ENCODE measurements at regions of chr20 and their contacts with region 1.

Region 1: GRCh38 chr20:9160757-9161156 is 91.9 kb downstream of the PLCB4 start:
- DNase-seq: no peak
- ATAC-seq: peak; percentile 25 to 75 (median 66)
- H3K4me3 ChIP-seq: peak overlapping the region in 3 of 10 donors; percentile 1 to 20 (median 16)
- H3K27ac ChIP-seq: peak overlapping the region in 7 of 10 donors; percentile 13 to 72 (median 56)
- H3K4me1 ChIP-seq: peaks cover 3 to 47% (median 32%) of the 10 kb centered on the region in 9 donors
- H3K27me3 ChIP-seq: no peaks in the 10 kb centered on the region
- CTCF ChIP-seq: no peak

Region 2: DNA sequence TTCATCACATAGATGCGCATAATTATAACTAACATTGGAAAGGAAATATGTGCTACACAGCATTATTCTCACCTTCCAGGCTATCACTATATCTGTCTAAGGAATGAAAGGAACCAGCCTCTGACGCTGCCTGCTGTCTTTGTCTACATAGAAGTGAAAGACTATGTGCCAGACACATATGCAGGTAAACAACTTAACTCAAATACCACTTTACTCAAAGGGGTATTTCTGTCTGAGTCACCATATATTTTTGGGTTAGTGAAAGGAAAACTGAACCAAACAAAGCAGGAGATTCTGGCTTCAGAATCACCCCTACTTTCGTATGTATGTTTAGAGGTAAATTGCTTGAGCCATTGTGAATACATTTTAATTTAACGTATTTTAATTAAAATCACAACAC is 420.5 kb before region 1 on chr20:
- intact Hi-C with region 1: no loop called
- DNase-seq: no peak
- ATAC-seq: no peak
- H3K4me3 ChIP-seq: no peak overlapping the region
- H3K27ac ChIP-seq: no peak overlapping the region
- H3K4me1 ChIP-seq: no peaks in the 10 kb centered on the region
- H3K27me3 ChIP-seq: no peaks in the 10 kb centered on the region
- CTCF ChIP-seq: no peak

Region 3: DNA sequence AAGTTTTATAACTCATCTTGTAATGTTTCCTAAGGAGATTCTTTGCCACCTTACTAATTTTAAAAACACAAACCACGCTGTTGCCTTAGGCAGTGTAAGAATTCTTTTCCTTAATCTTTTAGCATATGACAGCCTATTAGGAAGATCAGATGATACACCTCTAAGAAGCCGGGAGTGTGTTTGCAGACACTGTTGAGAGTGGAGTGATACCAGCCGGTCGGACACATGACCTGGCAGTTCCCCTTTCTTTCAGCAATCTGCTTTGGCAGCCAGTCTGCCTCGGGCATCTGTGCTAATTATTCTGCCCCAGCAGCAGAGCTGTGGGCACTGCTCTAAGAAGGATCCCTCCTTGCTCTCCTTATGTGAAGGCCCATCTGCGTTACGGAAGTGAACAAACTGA is 41.0 kb before region 1 on chr20:
- intact Hi-C with region 1: loop called in 3 of 10 experiments (anchors 10 kb)
- DNase-seq: peak; percentile 49 to 68
- ATAC-seq: peak; percentile 87 to 98 (median 95)
- H3K4me3 ChIP-seq: peak overlapping the region in 1 of 10 donors; percentile 17
- H3K27ac ChIP-seq: peak overlapping the region in 7 of 10 donors; percentile 12 to 71 (median 61)
- H3K4me1 ChIP-seq: peaks cover 0 to 30% (median 11%) of the 10 kb centered on the region in 9 donors
- H3K27me3 ChIP-seq: no peaks in the 10 kb centered on the region
- CTCF ChIP-seq: no peak

Region 4: DNA sequence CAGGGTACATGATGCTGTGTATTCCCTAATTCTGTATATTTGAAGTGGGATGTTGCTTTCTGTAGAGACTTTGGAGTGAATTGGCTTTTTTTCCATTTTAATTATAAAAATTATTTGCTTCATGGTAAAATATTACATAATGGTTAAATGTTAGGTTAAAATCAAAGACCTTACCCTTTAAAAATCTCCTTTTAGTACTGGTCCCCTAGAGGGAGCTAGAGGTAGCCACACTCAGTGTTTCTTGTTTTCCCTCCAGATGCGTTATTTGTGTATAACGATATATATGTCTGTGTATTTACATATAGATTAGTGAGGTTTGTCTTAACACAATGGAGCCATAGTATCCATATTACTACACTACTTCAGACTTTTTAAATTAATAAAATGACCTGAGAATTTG is 54.8 kb after region 1 on chr20:
- intact Hi-C with region 1: no loop called
- DNase-seq: no peak
- ATAC-seq: no peak
- H3K4me3 ChIP-seq: no peak overlapping the region
- H3K27ac ChIP-seq: no peak overlapping the region
- H3K4me1 ChIP-seq: peaks cover 0 to 43% (median 20%) of the 10 kb centered on the region in 9 donors
- H3K27me3 ChIP-seq: no peaks in the 10 kb centered on the region
- CTCF ChIP-seq: peak in 7 of 9 donors; percentile 21 to 45 (median 25)

Region 5: GRCh38 chr20:10754824-10755223 is 1594.1 kb after region 1 on chr20:
- intact Hi-C with region 1: loop called in 1 of 10 experiments (anchors 5 kb)
- DNase-seq: no peak
- ATAC-seq: no peak
- H3K4me3 ChIP-seq: no peak overlapping the region
- H3K27ac ChIP-seq: peak overlapping the region in 1 of 10 donors; percentile 42
- H3K4me1 ChIP-seq: peaks cover 0 to 11% (median 0%) of the 10 kb centered on the region in 9 donors
- H3K27me3 ChIP-seq: no peaks in the 10 kb centered on the region
- CTCF ChIP-seq: no peak

Measured in heart right ventricle (tissue), 16 donors.